Calu3 (cell line): ENCODE measurements at regions of chr7 and their contacts with region 1.

Region 1: GRCh38 chr7:91264046-91264923 is at the start of gene FZD1:
- DNase-seq: peak; percentile 91
- H3K4me3 Mint-ChIP-seq: peak within 1 kb of the TSS; percentile 91
- H3K27ac Mint-ChIP-seq: peak within 1 kb of the TSS; percentile 78
- H3K4me1 Mint-ChIP-seq: no peaks in the 10 kb centered on the region
- H3K27me3 Mint-ChIP-seq: no peaks in the 10 kb centered on the region
- CTCF ChIP-seq: no peak
- total RNA-seq, gene FZD1: 3.2 and 3.7 TPM in 2 replicates

Region 2: DNA sequence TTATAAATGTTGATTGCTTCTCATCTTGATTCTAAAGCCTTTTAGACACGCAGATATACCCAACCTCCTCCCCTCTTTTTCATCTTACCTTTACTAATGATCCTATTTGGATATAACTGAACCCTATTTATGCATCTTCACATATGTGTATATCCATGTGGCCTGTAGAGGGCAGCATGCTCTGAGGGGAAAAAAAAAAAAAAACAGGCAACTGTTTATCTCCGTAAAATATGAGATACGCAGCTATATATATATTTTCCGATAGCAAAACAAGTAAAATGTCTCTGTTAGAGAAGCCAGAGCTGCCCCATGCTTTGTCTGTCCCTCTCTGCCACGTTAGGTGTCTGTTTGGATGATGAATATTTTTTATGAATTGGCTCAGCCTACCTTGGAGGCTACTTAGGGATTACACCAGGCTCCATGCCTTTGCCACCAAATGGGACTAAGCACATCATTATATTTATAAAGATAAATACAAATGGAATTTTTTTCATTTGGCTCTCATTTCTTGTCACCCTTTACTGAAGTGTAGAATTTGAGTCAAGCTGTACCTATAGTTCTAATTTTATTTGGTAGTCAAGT is 174.8 kb before region 1 on chr7:
- CTCF ChIA-PET with region 1: interaction called, 3 read pairs
- intact Hi-C with region 1: loop called (anchors 10 kb)
- DNase-seq: peak; percentile 15
- H3K4me3 Mint-ChIP-seq: no peak overlapping the region
- H3K27ac Mint-ChIP-seq: no peak overlapping the region
- H3K4me1 Mint-ChIP-seq: no peaks in the 10 kb centered on the region
- H3K27me3 Mint-ChIP-seq: no peaks in the 10 kb centered on the region
- CTCF ChIP-seq: peak; percentile 48

Region 3: GRCh38 chr7:91182819-91183764 is 81.2 kb before region 1 on chr7:
- CTCF ChIA-PET with region 1: no interaction called
- intact Hi-C with region 1: no loop called
- DNase-seq: no peak
- H3K4me3 Mint-ChIP-seq: no peak overlapping the region
- H3K27ac Mint-ChIP-seq: no peak overlapping the region
- H3K4me1 Mint-ChIP-seq: no peaks in the 10 kb centered on the region
- H3K27me3 Mint-ChIP-seq: no peaks in the 10 kb centered on the region
- CTCF ChIP-seq: no peak